ENCODE measurements at regions of chr16 and their contacts with region 1.

Region 1: GRCh38 chr16:66552286-66553177 is at the start of gene CKLF:
- DNase-seq: peak; percentile 88 to 96 (median 91)
- ATAC-seq: peak; percentile 77 to 91 (median 84)
- H3K4me3 ChIP-seq: peak within 1 kb of the TSS; percentile 49 to 78 (median 64)
- H3K27ac ChIP-seq: peak within 1 kb of the TSS; percentile 84 to 99 (median 93)
- H3K4me1 ChIP-seq: peaks cover 0 to 81% (median 45%) of the 10 kb centered on the region in 12 donors
- H3K27me3 ChIP-seq: no peaks in the 10 kb centered on the region
- CTCF ChIP-seq: no peak
- POLR2A ChIP-seq: peak in 1 of 2 donors; percentile 77
- total RNA-seq, gene CKLF: 4.1 to 28.9 (median 6.4) TPM

Region 2: DNA sequence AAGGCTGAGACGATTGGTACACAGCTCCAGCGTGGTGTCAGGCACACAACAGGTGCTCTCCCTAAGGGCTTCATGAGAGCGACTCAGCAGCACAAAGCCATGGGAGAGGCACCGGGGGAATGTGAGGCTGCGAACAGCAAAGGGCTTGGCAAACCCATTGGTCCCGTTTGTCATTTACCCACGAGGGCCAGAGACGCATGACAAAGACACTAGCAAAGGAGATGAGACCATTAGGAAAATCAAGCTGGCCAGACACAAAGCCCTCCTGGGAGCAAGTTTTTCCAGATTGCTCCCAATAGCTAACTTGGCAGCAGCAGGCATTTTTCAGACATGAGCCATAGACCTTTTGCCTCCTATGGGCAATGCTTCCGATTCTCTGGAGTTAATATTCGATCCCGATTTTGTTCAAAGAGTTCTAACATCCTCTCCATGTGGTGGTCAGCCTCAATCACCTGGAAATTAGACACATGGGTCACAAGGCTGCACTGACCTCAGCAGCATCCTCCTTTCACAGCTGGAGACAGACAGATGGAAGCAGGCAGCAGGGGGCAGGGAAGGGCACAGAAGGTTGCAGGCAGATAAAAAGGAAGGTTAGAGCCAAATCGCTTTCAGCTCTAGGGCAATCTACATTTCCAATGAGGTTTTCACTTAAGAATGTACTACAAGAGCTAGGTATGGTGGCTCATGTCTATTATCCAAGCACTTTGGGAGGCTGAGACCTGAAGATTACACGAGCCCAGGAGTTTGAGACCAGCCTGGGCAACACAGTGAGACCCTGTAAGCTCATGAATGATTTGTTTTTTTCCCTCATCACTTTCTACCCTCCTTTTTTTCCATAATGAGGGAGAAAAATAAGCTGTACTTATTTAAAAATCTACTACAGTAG is 40.7 kb before region 1 on chr16:
- intact Hi-C with region 1: loop called in 6 of 10 experiments (anchors 2 to 5 kb)
- DNase-seq: peak in 1 of 5 donors; percentile 60
- ATAC-seq: peak in 2 of 4 donors; percentile 2 to 6
- H3K4me3 ChIP-seq: no peak overlapping the region
- H3K27ac ChIP-seq: peak overlapping the region; percentile 31 to 84 (median 66)
- H3K4me1 ChIP-seq: peaks cover 10 to 65% (median 46%) of the 10 kb centered on the region in 12 donors
- H3K27me3 ChIP-seq: no peaks in the 10 kb centered on the region
- CTCF ChIP-seq: peak in 3 of 12 donors; percentile 5 to 34 (median 22)
- POLR2A ChIP-seq: no peak

Region 3: DNA sequence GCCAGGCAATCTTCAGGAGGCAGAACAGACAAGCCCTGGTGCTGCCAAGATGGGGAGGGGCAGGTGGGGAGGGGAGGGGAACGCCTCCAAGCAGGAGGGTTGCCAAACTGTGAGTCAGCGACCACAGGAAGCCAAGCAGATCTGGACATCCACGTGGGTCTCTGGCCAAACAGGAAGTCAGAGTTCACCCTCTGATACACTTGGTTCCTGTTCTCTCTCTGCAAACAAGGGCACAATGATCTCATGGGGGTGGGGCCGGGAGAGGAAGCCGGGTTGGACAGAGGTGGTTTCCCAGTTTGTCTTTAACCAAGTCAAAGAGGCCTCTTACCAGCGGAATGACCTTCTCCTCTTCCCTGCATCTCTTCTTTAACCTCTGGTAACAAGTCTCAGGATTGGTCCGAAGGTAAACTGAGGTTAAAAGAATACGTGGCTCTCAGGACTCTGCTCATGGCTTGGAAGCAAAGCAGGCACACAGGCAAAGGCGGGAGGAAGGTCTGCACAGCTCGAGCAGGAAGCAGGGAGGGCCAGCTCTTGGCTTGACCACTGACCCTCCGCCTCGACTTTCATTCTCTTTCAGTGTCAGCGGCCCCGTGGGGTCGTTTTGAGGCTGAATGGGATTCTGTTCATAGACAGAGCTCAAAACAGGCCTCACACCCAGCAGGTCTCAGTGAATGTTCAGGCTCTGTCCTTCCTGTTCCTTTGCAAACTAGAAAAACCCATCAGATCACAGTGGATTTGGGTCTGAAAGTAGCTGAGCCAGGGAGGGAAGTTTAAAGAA is 35.5 kb before region 1 on chr16:
- intact Hi-C with region 1: loop called in 6 of 10 experiments (anchors 2 to 5 kb)
- DNase-seq: peak; percentile 97 to 99 (median 98)
- ATAC-seq: peak; percentile 95 to 96 (median 96)
- H3K4me3 ChIP-seq: peak overlapping the region in 10 of 12 donors; percentile 21 to 50 (median 30)
- H3K27ac ChIP-seq: peak overlapping the region; percentile 89 to 100 (median 97)
- H3K4me1 ChIP-seq: peaks cover 18 to 87% (median 67%) of the 10 kb centered on the region in 12 donors
- H3K27me3 ChIP-seq: no peaks in the 10 kb centered on the region
- CTCF ChIP-seq: no peak
- POLR2A ChIP-seq: peak in 1 of 2 donors; percentile 69

Region 4: GRCh38 chr16:66751303-66751991 is 198.9 kb after region 1 on chr16 and contains the start of gene DYNC1LI2:
- intact Hi-C with region 1: no loop called
- DNase-seq: peak; percentile 86 to 91 (median 87)
- ATAC-seq: peak; percentile 79 to 95 (median 92)
- H3K4me3 ChIP-seq: peak within 1 kb of the TSS; percentile 63 to 100 (median 96)
- H3K27ac ChIP-seq: peak within 1 kb of the TSS; percentile 88 to 100 (median 95)
- H3K4me1 ChIP-seq: peaks cover 0 to 55% (median 21%) of the 10 kb centered on the region in 12 donors
- H3K27me3 ChIP-seq: no peaks in the 10 kb centered on the region
- CTCF ChIP-seq: peak; percentile 63 to 98 (median 88)
- POLR2A ChIP-seq: peak in 1 of 2 donors; percentile 38
- total RNA-seq, gene DYNC1LI2: 58.3 to 117 (median 88.6) TPM